ENCODE measurements at regions of chr11 and their contacts with region 1.

Region 1: GRCh38 chr11:33996498-33997454 is 54.8 kb upstream of the CAPRIN1 start:
- DNase-seq: peak; percentile 84
- ATAC-seq: peak; percentile 99
- H3K4me3 Mint-ChIP-seq: no peak overlapping the region
- H3K27ac Mint-ChIP-seq: no peak overlapping the region
- H3K4me1 Mint-ChIP-seq: peaks cover 9% of the 10 kb centered on the region
- H3K27me3 Mint-ChIP-seq: peaks cover 11% of the 10 kb centered on the region

Region 2: DNA sequence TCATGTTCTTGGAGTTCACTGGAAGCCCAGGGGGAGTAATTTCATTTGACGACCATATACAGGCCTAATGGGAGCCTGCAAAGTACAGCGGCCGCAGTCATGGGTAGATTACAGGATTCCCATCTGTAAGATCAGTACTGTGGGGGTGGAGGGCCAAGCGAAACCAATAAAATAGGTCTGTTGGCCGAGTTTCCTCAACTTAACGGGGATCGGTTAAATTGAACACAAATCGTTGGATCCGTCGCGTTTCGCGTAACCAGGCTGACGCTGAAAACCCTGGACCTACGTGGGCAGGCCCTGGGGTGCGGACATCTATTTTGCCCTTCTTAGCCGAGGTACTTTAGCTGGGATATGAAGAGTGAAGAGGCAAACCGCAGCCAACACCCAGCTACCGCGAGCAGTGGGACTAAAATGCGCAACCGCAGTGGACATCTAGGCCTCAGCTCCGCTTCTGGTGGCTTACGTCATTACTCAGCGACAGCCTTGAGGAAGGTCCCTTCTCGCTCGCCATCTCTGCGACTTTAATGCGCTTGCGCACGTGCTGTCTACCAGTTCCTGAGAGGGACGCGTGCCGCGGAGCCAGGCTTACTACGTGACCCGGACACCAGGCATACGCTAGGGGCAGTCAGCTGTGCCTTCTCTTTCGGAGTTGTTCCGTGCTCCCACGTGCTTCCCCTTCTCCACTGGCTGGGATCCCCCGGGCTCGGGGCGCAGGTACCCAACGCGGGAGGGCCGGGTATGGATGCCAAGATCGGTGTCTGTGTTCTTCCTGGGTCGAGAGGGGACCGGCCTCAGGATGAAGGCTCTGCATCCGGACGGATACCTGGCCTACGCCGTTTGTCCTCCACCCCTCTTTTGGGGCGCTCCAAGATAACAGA is 108.5 kb after region 1 on chr11 and contains the start of gene NAT10:
- CTCF ChIA-PET with region 1: interaction called, 7 read pairs
- POLR2A ChIA-PET with region 1: no interaction called
- intact Hi-C with region 1: loop called (anchors 1 kb)
- DNase-seq: peak; percentile 98
- ATAC-seq: peak; percentile 93
- H3K4me3 Mint-ChIP-seq: peak within 1 kb of the TSS; percentile 97
- H3K27ac Mint-ChIP-seq: peak within 1 kb of the TSS; percentile 99
- H3K4me1 Mint-ChIP-seq: peaks cover 57% of the 10 kb centered on the region
- H3K27me3 Mint-ChIP-seq: no peaks in the 10 kb centered on the region
- total RNA-seq, gene NAT10: 142 to 147 TPM

Region 3: DNA sequence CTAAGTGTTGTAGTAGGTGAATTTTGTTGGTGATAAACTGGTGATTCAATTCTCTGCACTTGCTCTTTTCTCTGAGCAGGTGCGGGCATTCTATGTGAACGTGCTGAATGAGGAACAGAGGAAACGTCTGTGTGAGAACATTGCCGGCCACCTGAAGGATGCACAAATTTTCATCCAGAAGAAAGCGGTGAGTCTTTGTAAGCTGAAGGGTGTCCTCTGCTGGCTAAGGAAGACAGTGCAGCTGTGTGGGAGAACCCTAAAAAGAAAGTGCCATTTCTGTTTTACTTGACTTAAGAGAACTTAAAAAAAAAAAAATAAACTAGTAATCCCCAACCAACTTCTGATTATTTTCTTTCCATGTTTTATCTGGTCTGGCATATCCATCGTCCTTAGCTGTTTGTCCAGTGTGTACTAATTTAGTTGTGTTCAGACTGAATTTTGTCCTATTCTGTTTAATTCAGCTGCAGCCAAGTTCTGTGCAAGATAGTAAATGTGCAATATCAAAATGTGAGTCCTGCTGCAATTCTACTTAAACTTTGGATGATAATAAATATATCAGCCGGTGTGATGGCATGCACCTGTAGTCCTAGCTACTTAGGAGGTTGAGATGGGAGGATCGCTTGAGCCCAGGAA is 471.5 kb after region 1 on chr11:
- CTCF ChIA-PET with region 1: interaction called, 4 read pairs
- POLR2A ChIA-PET with region 1: no interaction called
- intact Hi-C with region 1: loop called in 1 of 2 experiments (anchors 2 kb)
- DNase-seq: peak; percentile 68
- ATAC-seq: peak; percentile 66
- H3K4me3 Mint-ChIP-seq: no peak overlapping the region
- H3K27ac Mint-ChIP-seq: no peak overlapping the region
- H3K4me1 Mint-ChIP-seq: peaks cover 4% of the 10 kb centered on the region
- H3K27me3 Mint-ChIP-seq: no peaks in the 10 kb centered on the region

Region 4: GRCh38 chr11:34492806-34493414 is 496.1 kb after region 1 on chr11:
- CTCF ChIA-PET with region 1: interaction called, 4 read pairs
- POLR2A ChIA-PET with region 1: no interaction called
- intact Hi-C with region 1: loop called in 1 of 2 experiments (anchors 5 kb)
- DNase-seq: peak; percentile 63
- ATAC-seq: no peak
- H3K4me3 Mint-ChIP-seq: no peak overlapping the region
- H3K27ac Mint-ChIP-seq: no peak overlapping the region
- H3K4me1 Mint-ChIP-seq: no peaks in the 10 kb centered on the region
- H3K27me3 Mint-ChIP-seq: no peaks in the 10 kb centered on the region